A673 (cell line): ENCODE measurements at regions of chr18 and their contacts with region 1.

Region 1: DNA sequence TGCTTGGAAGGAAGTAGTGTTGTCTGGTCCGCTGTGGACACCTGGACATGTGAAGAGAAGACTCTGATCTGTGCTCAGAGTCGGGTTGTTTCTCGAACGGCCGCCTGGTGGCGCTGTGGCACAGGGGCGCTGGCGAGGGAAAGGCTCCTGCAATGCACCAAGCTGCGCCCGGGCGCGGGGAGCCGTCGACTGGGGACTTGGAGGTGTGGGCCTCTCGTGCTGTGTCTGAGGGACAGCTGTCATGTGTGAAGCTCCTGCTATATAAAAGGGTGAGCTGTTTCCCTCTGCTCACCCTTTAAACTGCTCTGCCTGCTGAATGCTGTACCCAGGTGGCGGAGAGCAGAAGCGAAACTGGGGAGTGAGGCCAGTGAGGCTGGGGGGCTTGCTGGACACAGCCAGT is 44.0 kb downstream of the GNAL start:
- DNase-seq: peak; percentile 78
- H3K4me3 ChIP-seq: no peak overlapping the region
- H3K27ac ChIP-seq: no peak overlapping the region
- H3K4me1 ChIP-seq: no peaks in the 10 kb centered on the region
- H3K27me3 ChIP-seq: peaks cover 78% of the 10 kb centered on the region
- CTCF ChIP-seq: peak; percentile 92

Region 2: DNA sequence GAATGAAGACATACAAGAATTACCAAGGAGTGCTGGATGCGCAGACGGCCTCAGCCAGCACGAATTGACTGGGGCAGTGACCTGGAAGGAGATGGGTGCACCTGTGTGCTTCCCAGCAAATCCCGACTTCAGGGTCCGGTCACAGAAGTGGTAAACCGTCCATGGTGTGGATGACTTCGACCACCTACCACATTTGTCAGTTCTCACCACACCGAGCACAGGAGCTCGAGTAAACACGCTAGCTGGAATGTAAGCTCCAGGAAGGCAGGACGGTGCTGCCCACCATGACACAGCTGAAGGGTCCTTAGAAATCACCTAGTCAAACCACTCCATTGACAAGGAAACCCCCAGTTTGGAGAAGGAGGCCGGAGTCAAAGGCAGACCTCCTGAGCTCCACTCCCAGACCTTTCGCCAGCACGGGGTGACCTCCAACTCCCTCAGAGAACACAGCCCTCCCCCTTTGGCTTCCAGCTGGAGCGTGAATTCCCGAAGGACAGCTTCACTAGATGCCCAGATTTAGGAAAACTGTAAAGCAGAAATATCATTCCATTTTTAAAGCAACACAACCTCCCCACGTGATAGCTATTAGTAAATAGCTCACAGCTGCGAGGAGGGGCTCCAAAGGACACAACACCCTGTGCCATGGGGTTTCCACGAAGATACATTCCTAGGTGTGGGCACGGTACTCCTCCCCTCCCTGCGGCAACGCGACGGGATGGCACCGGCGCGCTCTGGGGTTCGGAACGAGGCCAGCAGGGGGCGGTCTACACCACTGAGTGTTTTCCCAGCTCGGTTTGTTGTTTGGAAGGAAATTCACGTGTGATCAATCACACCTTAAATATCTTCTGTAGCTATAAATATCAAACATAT is 78.1 kb before region 1 on chr18:
- CTCF ChIA-PET with region 1: interaction called, 4 read pairs
- POLR2A ChIA-PET with region 1: no interaction called
- intact Hi-C with region 1: loop called (anchors 5 kb)
- DNase-seq: peak; percentile 56
- H3K4me3 ChIP-seq: no peak overlapping the region
- H3K27ac ChIP-seq: no peak overlapping the region
- H3K4me1 ChIP-seq: no peaks in the 10 kb centered on the region
- H3K27me3 ChIP-seq: peaks cover 58% of the 10 kb centered on the region
- CTCF ChIP-seq: peak; percentile 87

Region 3: GRCh38 chr18:11872479-11873136 is 139.6 kb after region 1 on chr18:
- CTCF ChIA-PET with region 1: no interaction called
- POLR2A ChIA-PET with region 1: no interaction called
- intact Hi-C with region 1: loop called (anchors 5 kb)
- DNase-seq: peak; percentile 33
- H3K4me3 ChIP-seq: no peak overlapping the region
- H3K27ac ChIP-seq: no peak overlapping the region
- H3K4me1 ChIP-seq: no peaks in the 10 kb centered on the region
- H3K27me3 ChIP-seq: peaks cover 15% of the 10 kb centered on the region
- CTCF ChIP-seq: peak; percentile 57

Region 4: GRCh38 chr18:11995445-11996189 is 262.6 kb after region 1 on chr18:
- CTCF ChIA-PET with region 1: interaction called, 6 read pairs
- POLR2A ChIA-PET with region 1: no interaction called
- intact Hi-C with region 1: loop called (anchors 5 kb)
- DNase-seq: peak; percentile 75
- H3K4me3 ChIP-seq: no peak overlapping the region
- H3K27ac ChIP-seq: no peak overlapping the region
- H3K4me1 ChIP-seq: no peaks in the 10 kb centered on the region
- H3K27me3 ChIP-seq: no peaks in the 10 kb centered on the region
- CTCF ChIP-seq: peak; percentile 92

Region 5: GRCh38 chr18:12236934-12237832 is 504.2 kb after region 1 on chr18:
- CTCF ChIA-PET with region 1: no interaction called
- POLR2A ChIA-PET with region 1: no interaction called
- intact Hi-C with region 1: loop called (anchors 10 kb)
- DNase-seq: peak; percentile 75
- H3K4me3 ChIP-seq: no peak overlapping the region
- H3K27ac ChIP-seq: no peak overlapping the region
- H3K4me1 ChIP-seq: no peaks in the 10 kb centered on the region
- H3K27me3 ChIP-seq: peaks cover 13% of the 10 kb centered on the region
- CTCF ChIP-seq: peak; percentile 97